Endothelial cell of umbilical vein (primary cell): ENCODE measurements at regions of chr5 and their contacts with region 1.

Region 1: DNA sequence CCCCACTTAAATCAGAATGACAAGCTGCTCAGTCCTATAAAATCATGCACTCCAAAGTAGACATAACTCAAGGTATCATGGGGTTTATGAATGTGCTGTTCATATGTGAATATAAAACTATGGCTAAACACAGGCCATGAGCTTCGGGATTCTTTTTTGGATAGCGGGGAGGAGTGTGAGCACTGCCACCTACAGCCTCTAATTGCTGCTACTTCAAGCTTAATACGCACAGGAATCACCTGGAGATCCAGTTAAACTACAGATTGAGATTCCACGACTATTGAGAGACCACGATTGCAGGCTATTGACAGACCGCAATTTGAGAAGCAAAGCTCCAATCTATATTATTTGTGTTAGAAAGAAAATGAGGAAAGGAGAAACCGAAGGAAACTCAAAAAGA is 231.6 kb downstream of the MCTP1 start:
- DNase-seq: no peak
- H3K4me3 ChIP-seq: no peak overlapping the region
- H3K27ac ChIP-seq: no peak overlapping the region
- H3K4me1 ChIP-seq: peaks cover 6% of the 10 kb centered on the region
- H3K27me3 ChIP-seq: no peaks in the 10 kb centered on the region
- CTCF ChIP-seq: no peak
- POLR2A ChIP-seq: no peak

Region 2: GRCh38 chr5:95063492-95063891 is 10.2 kb after region 1 on chr5:
- CTCF ChIA-PET with region 1: interaction called, 10 read pairs
- POLR2A ChIA-PET with region 1: no interaction called
- dilution Hi-C with region 1: no loop called
- intact Hi-C with region 1: no loop called
- DNase-seq: no peak
- H3K4me3 ChIP-seq: no peak overlapping the region
- H3K27ac ChIP-seq: no peak overlapping the region
- H3K4me1 ChIP-seq: no peaks in the 10 kb centered on the region
- H3K27me3 ChIP-seq: no peaks in the 10 kb centered on the region
- CTCF ChIP-seq: no peak
- POLR2A ChIP-seq: no peak